ENCODE measurements at regions of chr22 and their contacts with region 1.

Region 1: GRCh38 chr22:19629720-19630419 is 84.4 kb upstream of the SEPTIN5 start:
- DNase-seq: peak; percentile 75 to 89 (median 78)
- ATAC-seq: peak; percentile 82 to 93 (median 86)
- H3K4me3 ChIP-seq: no peak overlapping the region
- H3K27ac ChIP-seq: no peak overlapping the region
- H3K4me1 ChIP-seq: peaks cover 0 to 4% (median 0%) of the 10 kb centered on the region in 12 donors
- H3K27me3 ChIP-seq: peaks cover 0 to 8% (median 0%) of the 10 kb centered on the region in 9 donors
- CTCF ChIP-seq: peak; percentile 82 to 99 (median 91)
- POLR2A ChIP-seq: no peak

Region 2: DNA sequence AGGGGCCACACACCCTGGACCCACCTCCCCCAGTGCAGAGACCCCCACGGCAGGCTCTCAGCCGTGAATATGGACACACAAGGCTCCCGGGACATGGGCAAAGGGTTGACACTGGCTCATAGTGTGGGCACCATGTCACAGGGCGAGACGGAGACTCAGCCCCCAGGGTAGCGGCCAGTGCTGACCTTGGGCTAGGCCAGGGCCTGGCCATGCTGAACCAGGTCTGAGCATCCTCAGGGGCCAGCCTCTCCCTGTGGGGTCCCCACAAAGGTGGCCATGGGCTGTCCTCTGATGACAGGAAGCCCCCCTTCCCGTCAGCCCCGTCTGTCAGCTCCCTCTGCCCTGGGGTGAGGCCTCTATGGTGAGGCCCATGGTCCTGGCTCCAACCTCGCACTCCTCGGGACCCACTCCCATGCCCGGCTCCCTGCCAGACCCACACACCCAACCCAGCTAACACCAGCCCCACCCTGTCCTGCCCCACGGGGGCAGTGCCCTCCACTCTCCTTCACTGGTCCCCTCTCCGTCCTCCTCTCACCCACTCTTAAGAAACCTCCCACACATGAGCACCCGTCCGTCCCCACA is 674.8 kb before region 1 on chr22:
- intact Hi-C with region 1: loop called in 3 of 10 experiments (anchors 1 to 5 kb)
- DNase-seq: peak in 2 of 5 donors; percentile 6 to 48
- ATAC-seq: no peak
- H3K4me3 ChIP-seq: no peak overlapping the region
- H3K27ac ChIP-seq: no peak overlapping the region
- H3K4me1 ChIP-seq: no peaks in the 10 kb centered on the region
- H3K27me3 ChIP-seq: peaks cover 0 to 11% (median 0%) of the 10 kb centered on the region in 9 donors
- CTCF ChIP-seq: no peak
- POLR2A ChIP-seq: no peak

Region 3: GRCh38 chr22:19149047-19149883 is 480.6 kb before region 1 on chr22:
- intact Hi-C with region 1: loop called in 8 of 10 experiments (anchors 5 to 10 kb)
- DNase-seq: no peak
- ATAC-seq: no peak
- H3K4me3 ChIP-seq: peak overlapping the region in 10 of 12 donors; percentile 8 to 48 (median 24)
- H3K27ac ChIP-seq: no peak overlapping the region
- H3K4me1 ChIP-seq: peaks cover 0 to 19% (median 0%) of the 10 kb centered on the region in 12 donors
- H3K27me3 ChIP-seq: peaks cover 28 to 67% (median 50%) of the 10 kb centered on the region in 9 donors
- CTCF ChIP-seq: no peak
- POLR2A ChIP-seq: no peak

Region 4: GRCh38 chr22:19304547-19304946 is 325.3 kb before region 1 on chr22:
- intact Hi-C with region 1: loop called in 2 of 10 experiments (anchors 5 to 10 kb)
- DNase-seq: no peak
- ATAC-seq: no peak
- H3K4me3 ChIP-seq: no peak overlapping the region
- H3K27ac ChIP-seq: no peak overlapping the region
- H3K4me1 ChIP-seq: no peaks in the 10 kb centered on the region
- H3K27me3 ChIP-seq: no peaks in the 10 kb centered on the region
- CTCF ChIP-seq: no peak
- POLR2A ChIP-seq: no peak

Region 5: GRCh38 chr22:19368876-19369275 is 261.0 kb before region 1 on chr22:
- intact Hi-C with region 1: no loop called
- DNase-seq: no peak
- ATAC-seq: no peak
- H3K4me3 ChIP-seq: no peak overlapping the region
- H3K27ac ChIP-seq: no peak overlapping the region
- H3K4me1 ChIP-seq: no peaks in the 10 kb centered on the region
- H3K27me3 ChIP-seq: no peaks in the 10 kb centered on the region
- CTCF ChIP-seq: no peak
- POLR2A ChIP-seq: no peak

Region 6: GRCh38 chr22:19479357-19480172 is 150.3 kb before region 1 on chr22 and contains the start of gene CDC45:
- intact Hi-C with region 1: no loop called
- DNase-seq: peak; percentile 94 to 98 (median 97)
- ATAC-seq: peak; percentile 97 to 99 (median 98)
- H3K4me3 ChIP-seq: peak within 1 kb of the TSS; percentile 74 to 96 (median 86)
- H3K27ac ChIP-seq: peak within 1 kb of the TSS; percentile 94 to 99 (median 98)
- H3K4me1 ChIP-seq: peaks cover 6 to 30% (median 22%) of the 10 kb centered on the region in 12 donors
- H3K27me3 ChIP-seq: no peaks in the 10 kb centered on the region
- CTCF ChIP-seq: no peak
- POLR2A ChIP-seq: no peak
- total RNA-seq, gene CDC45: 0.16 to 3.1 (median 0.32) TPM in 5 of 9 donors, not detected in the others

Region 7: DNA sequence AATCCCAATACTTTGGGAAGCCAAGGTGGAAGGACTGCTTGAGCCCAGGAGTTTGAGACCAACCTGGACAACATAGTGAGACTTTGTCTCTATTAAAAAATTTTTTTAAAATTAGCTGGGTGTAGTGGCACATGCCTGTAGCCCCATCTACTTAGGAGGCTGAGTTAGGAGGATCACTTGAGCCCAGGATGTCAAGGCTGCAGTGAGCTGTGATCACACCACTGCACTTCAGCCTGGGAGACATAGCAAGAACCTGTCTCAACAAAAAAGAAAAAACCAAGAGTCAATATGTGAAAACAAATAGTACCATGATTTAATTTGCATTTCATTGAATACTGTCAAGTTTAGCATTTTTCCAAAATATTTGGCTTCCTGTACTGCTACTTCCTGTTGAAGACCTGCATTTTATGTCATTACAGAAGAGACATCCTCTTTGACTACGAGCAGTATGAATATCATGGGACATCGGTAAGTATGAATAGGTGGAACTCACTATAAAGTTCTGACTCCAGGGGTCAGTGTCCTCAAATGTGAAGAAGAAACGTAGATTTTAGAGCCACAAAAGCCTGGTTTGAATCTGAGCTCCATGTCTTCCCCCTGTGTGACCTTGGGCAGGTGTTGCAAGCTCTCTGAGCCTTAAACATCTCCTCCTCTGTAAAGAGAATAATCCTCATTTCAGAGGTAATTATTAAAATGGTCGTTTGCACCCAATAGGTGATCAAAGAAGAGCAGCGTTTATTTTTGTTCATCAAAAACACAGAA is 134.1 kb before region 1 on chr22:
- intact Hi-C with region 1: loop called in 9 of 10 experiments (anchors 1 to 5 kb)
- DNase-seq: no peak
- ATAC-seq: peak in 1 of 4 donors; percentile 64
- H3K4me3 ChIP-seq: no peak overlapping the region
- H3K27ac ChIP-seq: no peak overlapping the region
- H3K4me1 ChIP-seq: no peaks in the 10 kb centered on the region
- H3K27me3 ChIP-seq: no peaks in the 10 kb centered on the region
- CTCF ChIP-seq: peak in 11 of 12 donors; percentile 5 to 57 (median 37)
- POLR2A ChIP-seq: no peak

Region 8: GRCh38 chr22:19619144-19620009 is 10.5 kb before region 1 on chr22:
- intact Hi-C with region 1: no loop called
- DNase-seq: no peak
- ATAC-seq: no peak
- H3K4me3 ChIP-seq: no peak overlapping the region
- H3K27ac ChIP-seq: no peak overlapping the region
- H3K4me1 ChIP-seq: peaks cover 0 to 17% (median 6%) of the 10 kb centered on the region in 12 donors
- H3K27me3 ChIP-seq: no peaks in the 10 kb centered on the region
- CTCF ChIP-seq: no peak
- POLR2A ChIP-seq: no peak

Region 9: DNA sequence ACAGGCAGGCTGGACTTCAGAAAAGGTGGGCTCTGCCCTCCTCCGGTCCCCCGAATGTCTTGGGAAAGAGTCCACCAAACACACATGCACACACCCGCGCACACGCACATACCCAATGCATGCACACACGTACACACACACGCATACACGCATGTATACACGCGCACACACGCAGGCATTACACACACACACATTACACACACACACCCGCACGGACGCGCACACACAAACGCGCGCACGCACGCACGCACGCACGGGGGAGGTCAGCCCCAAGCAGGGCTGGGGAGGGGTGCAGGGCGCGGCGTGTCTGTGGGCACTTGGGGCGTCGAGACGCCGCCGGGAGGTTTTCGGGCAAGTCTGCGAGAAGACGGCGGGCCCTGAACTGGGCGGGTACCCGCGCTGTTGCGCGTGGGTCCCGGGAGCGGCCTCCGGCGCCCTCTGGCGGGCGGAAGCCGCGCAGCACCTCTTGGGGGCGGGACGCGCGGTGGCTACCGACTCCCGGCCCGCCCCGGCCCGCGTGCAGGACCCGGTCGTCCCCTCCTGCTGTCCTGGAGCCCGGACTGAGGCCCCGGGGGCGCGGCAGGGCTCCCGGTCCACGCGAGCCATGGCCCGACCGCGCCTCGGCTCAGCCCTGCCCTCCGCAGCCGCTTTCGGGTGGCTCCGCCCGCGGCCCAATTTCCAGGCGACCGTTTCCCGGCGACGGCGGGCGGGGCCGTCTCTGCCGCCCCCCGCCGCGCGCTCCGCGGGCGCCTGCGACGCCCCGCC is 88.0 kb after region 1 on chr22:
- intact Hi-C with region 1: loop called in 6 of 10 experiments (anchors 1 to 10 kb)
- DNase-seq: peak; percentile 71 to 90 (median 83)
- ATAC-seq: peak; percentile 9 to 76 (median 53)
- H3K4me3 ChIP-seq: peak overlapping the region; percentile 61 to 83 (median 66)
- H3K27ac ChIP-seq: peak overlapping the region; percentile 74 to 99 (median 91)
- H3K4me1 ChIP-seq: peaks cover 0 to 86% (median 37%) of the 10 kb centered on the region in 12 donors
- H3K27me3 ChIP-seq: peaks cover 0 to 58% (median 6%) of the 10 kb centered on the region in 9 donors
- CTCF ChIP-seq: peak; percentile 90 to 100 (median 98)
- POLR2A ChIP-seq: peak in 1 of 2 donors; percentile 22